ENCODE measurements at regions of chr2 and their contacts with region 1.

Region 1: GRCh38 chr2:74334931-74335333 is 8.3 kb downstream of the SLC4A5 start:
- DNase-seq: peak; percentile 37 to 56
- ATAC-seq: peak; percentile 83 to 85
- H3K4me3 ChIP-seq: no peak overlapping the region
- H3K27ac ChIP-seq: no peak overlapping the region
- H3K4me1 ChIP-seq: no peaks in the 10 kb centered on the region
- H3K27me3 ChIP-seq: no peaks in the 10 kb centered on the region
- CTCF ChIP-seq: peak; percentile 70 to 93 (median 79)
- POLR2A ChIP-seq: no peak

Region 2: GRCh38 chr2:74250189-74250631 is 84.7 kb before region 1 on chr2:
- in situ Hi-C with region 1: no loop called
- intact Hi-C with region 1: loop called (anchors 2 kb)
- DNase-seq: no peak
- ATAC-seq: peak in 1 of 2 donors; percentile 49
- H3K4me3 ChIP-seq: no peak overlapping the region
- H3K27ac ChIP-seq: no peak overlapping the region
- H3K4me1 ChIP-seq: no peaks in the 10 kb centered on the region
- H3K27me3 ChIP-seq: no peaks in the 10 kb centered on the region
- CTCF ChIP-seq: peak; percentile 31 to 68 (median 56)
- POLR2A ChIP-seq: no peak